ENCODE measurements at regions of chr19 and their contacts with region 1.

Region 1: GRCh38 chr19:38134540-38135149 is 89.4 kb downstream of the DPF1 start:
- DNase-seq: peak; percentile 25
- ATAC-seq: peak; percentile 38; the same call in 1 of the 2 replicates
- H3K4me3 ChIP-seq: no peak overlapping the region
- H3K27ac ChIP-seq: no peak overlapping the region
- H3K4me1 ChIP-seq: no peaks in the 10 kb centered on the region
- H3K27me3 ChIP-seq: no peaks in the 10 kb centered on the region
- CTCF ChIP-seq: peak; percentile 96

Region 2: DNA sequence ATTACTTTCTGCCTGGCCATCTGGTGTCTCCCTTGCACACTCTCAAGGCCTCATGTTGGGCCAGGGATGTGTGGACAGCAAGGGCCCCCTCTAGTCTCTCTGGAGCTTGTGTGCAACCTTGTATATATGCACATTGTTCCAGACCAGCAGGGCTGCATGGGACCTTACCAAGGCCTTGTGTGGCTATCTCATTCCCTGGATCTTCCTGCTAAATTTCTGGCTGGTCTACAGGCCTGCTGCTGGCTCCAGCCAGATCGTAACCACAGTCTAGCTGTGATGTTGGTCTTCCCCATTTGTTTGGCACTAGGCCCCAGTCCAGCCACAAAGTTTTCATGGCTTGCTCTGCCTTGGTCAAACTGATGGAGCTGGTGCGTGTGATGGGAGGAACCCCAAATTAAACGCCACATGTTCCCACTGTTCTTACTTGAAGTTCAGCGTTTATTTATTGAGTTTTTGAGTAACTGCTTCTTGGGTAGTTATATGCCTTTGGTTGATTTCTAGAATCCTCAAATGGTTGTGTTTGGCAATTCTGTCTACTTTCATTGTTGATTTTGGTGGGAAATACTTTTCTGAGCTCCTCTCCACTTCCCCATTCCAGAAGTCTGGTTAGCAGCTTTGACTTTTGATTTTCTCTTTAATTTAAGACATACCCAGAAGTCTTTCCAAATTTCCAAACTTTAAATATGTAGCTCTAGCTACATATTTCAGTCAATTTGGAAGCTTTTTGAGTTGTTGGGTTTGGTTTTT is 171.3 kb before region 1 on chr19:
- CTCF ChIA-PET with region 1: no interaction called
- POLR2A ChIA-PET with region 1: interaction called, 13 read pairs
- in situ Hi-C with region 1: no loop called
- intact Hi-C with region 1: no loop called
- DNase-seq: no peak
- ATAC-seq: no peak
- H3K4me3 ChIP-seq: no peak overlapping the region
- H3K27ac ChIP-seq: no peak overlapping the region; the same call in 1 of the 2 replicates
- H3K4me1 ChIP-seq: peaks cover 12% of the 10 kb centered on the region
- H3K27me3 ChIP-seq: no peaks in the 10 kb centered on the region
- CTCF ChIP-seq: no peak

Region 3: GRCh38 chr19:38155453-38155852 is 20.8 kb after region 1 on chr19:
- CTCF ChIA-PET with region 1: interaction called, 16 read pairs
- POLR2A ChIA-PET with region 1: no interaction called
- in situ Hi-C with region 1: no loop called
- intact Hi-C with region 1: no loop called
- DNase-seq: no peak
- ATAC-seq: no peak
- H3K4me3 ChIP-seq: no peak overlapping the region
- H3K27ac ChIP-seq: no peak overlapping the region
- H3K4me1 ChIP-seq: no peaks in the 10 kb centered on the region
- H3K27me3 ChIP-seq: no peaks in the 10 kb centered on the region
- CTCF ChIP-seq: no peak

Region 4: GRCh38 chr19:38183251-38183897 is 48.7 kb after region 1 on chr19:
- CTCF ChIA-PET with region 1: no interaction called
- POLR2A ChIA-PET with region 1: interaction called, 11 read pairs
- in situ Hi-C with region 1: no loop called
- intact Hi-C with region 1: no loop called
- DNase-seq: no peak
- ATAC-seq: peak; percentile 64; the same call in 1 of the 2 replicates
- H3K4me3 ChIP-seq: no peak overlapping the region
- H3K27ac ChIP-seq: no peak overlapping the region
- H3K4me1 ChIP-seq: no peaks in the 10 kb centered on the region
- H3K27me3 ChIP-seq: no peaks in the 10 kb centered on the region
- CTCF ChIP-seq: no peak

Measured in Panc1 (cell line).